CD4-positive, alpha-beta T cell (primary cell): ENCODE measurements at regions of chr17 and their contacts with region 1.

Region 1: GRCh38 chr17:70563281-70563820 is 394.0 kb downstream of the KCNJ2 start:
- DNase-seq: no peak
- ATAC-seq: no peak
- H3K4me3 ChIP-seq: no peak overlapping the region
- H3K4me3 Mint-ChIP-seq: no peak overlapping the region
- H3K27ac ChIP-seq: no peak overlapping the region
- H3K27ac Mint-ChIP-seq: no peak overlapping the region
- H3K4me1 ChIP-seq: no peaks in the 10 kb centered on the region
- H3K4me1 Mint-ChIP-seq: no peaks in the 10 kb centered on the region
- H3K27me3 ChIP-seq: no peaks in the 10 kb centered on the region
- H3K27me3 Mint-ChIP-seq: no peaks in the 10 kb centered on the region
- CTCF ChIP-seq: no peak

Region 2: DNA sequence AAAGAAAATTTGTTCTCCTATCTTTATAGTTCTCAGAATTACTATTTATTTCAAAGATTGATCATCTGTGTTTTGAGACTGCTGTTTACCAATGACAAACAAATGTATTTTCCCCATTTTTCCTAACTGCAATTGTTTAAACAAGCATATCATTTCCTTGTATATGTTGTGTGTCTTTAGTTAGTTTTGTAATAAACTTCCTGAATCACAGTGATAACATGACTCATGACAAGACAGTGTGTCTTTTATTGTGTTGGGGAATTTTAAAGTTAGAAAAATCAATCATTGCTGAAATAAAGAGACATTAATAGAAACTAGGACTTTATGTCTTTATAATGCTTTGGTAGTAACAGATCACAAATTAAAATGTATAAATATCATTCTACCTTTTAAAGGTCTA is 45.5 kb before region 1 on chr17:
- CTCF ChIA-PET with region 1: no interaction called
- POLR2A ChIA-PET with region 1: no interaction called
- intact Hi-C with region 1: loop called in 1 of 2 experiments (anchors 10 kb)
- DNase-seq: no peak
- ATAC-seq: no peak
- H3K4me3 ChIP-seq: no peak overlapping the region
- H3K4me3 Mint-ChIP-seq: no peak overlapping the region
- H3K27ac ChIP-seq: no peak overlapping the region
- H3K27ac Mint-ChIP-seq: no peak overlapping the region
- H3K4me1 ChIP-seq: no peaks in the 10 kb centered on the region
- H3K4me1 Mint-ChIP-seq: no peaks in the 10 kb centered on the region
- H3K27me3 ChIP-seq: no peaks in the 10 kb centered on the region
- H3K27me3 Mint-ChIP-seq: no peaks in the 10 kb centered on the region
- CTCF ChIP-seq: no peak

Region 3: GRCh38 chr17:70588003-70588402 is 24.7 kb after region 1 on chr17:
- CTCF ChIA-PET with region 1: no interaction called
- POLR2A ChIA-PET with region 1: no interaction called
- intact Hi-C with region 1: no loop called
- DNase-seq: no peak
- ATAC-seq: no peak
- H3K4me3 ChIP-seq: no peak overlapping the region
- H3K4me3 Mint-ChIP-seq: no peak overlapping the region
- H3K27ac ChIP-seq: no peak overlapping the region
- H3K27ac Mint-ChIP-seq: no peak overlapping the region
- H3K4me1 ChIP-seq: no peaks in the 10 kb centered on the region
- H3K4me1 Mint-ChIP-seq: no peaks in the 10 kb centered on the region
- H3K27me3 ChIP-seq: no peaks in the 10 kb centered on the region
- H3K27me3 Mint-ChIP-seq: no peaks in the 10 kb centered on the region
- CTCF ChIP-seq: no peak

Region 4: DNA sequence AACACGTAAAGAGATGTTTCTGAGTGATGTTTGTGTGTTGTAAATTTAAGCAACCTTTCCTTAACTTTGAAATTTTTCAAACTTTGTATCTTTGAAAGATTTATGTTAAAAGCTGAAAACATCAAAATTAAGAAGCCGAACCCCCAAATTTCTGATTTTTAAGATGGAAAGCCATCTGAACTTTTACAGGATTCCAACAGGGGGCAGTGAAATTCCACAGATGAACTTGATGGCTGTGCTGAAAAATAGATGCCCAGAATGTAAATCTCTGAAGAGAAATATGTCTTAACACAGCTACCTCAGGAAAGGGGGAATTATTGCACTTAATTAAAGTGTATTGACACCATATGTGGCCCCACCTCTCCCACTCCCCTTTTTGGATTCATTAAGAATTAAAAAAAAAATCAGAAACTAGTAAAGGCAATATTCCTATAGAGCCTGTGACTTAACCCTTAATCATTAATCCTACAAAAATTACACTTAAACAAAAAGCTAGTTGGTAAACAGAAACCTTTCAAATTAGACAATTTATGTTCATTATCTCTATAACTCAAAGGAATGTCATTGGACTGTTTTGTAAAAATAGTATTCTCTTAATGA is 203.9 kb after region 1 on chr17:
- CTCF ChIA-PET with region 1: no interaction called
- POLR2A ChIA-PET with region 1: no interaction called
- intact Hi-C with region 1: no loop called
- DNase-seq: no peak
- ATAC-seq: no peak
- H3K4me3 ChIP-seq: no peak overlapping the region
- H3K4me3 Mint-ChIP-seq: no peak overlapping the region
- H3K27ac ChIP-seq: no peak overlapping the region
- H3K27ac Mint-ChIP-seq: no peak overlapping the region
- H3K4me1 ChIP-seq: no peaks in the 10 kb centered on the region
- H3K4me1 Mint-ChIP-seq: no peaks in the 10 kb centered on the region
- H3K27me3 ChIP-seq: no peaks in the 10 kb centered on the region
- H3K27me3 Mint-ChIP-seq: no peaks in the 10 kb centered on the region
- CTCF ChIP-seq: no peak